HepG2 (cell line): ENCODE measurements at regions of chr17 and their contacts with region 1.

Region 1: GRCh38 chr17:78828470-78829185 is 12.0 kb downstream of the USP36 start:
- DNase-seq: no peak
- ATAC-seq: 0 out of 3 replicates have a peak, but pooled peaks have one; percentile 19
- H3K4me3 ChIP-seq: no peak overlapping the region
- H3K27ac ChIP-seq: no peak overlapping the region
- H3K4me1 ChIP-seq: peaks cover 29% of the 10 kb centered on the region
- H3K27me3 ChIP-seq: no peaks in the 10 kb centered on the region
- CTCF ChIP-seq: peak; percentile 31; the same call in 1 of the 2 replicates
- EP300 ChIP-seq: no peak
- POLR2A ChIP-seq: no peak
- RAD21 ChIP-seq: no peak

Region 2: DNA sequence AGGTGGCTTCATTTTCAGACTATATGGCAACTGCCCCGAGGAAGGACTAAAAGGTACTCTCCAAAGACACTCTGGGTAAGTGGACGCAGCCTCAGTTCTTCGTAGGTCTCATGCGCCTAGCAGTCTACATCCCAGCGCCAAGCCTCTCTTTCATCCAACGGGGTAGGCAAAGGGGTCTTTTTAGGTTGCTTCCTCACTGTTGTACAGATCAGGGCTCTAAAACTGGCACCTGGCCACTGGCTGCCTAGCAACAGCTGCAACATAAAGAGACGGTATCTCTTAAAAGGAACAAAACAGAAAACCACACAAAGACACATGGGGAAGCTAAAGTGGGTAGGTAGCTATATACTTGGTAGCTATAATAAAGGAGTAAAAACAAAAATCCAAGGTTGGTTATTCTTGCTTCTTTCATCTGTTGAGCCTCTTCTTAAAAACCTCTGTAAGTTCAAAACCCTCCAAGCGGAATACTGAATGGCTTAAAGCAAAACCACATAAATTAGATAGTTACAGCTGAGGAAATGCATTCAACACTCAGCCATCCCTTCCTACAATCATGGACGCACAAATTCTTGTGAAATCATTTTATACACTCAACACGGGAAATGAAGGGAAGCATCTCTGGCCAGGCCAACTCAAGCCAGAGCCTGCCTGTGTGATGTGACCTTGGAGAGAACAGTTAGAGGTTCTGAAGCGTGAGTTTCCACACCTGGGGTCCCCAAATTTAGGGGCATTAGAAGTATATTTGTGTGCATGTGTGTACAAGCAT is 69.2 kb before region 1 on chr17:
- CTCF ChIA-PET with region 1: no interaction called
- POLR2A ChIA-PET with region 1: no interaction called
- in situ Hi-C with region 1: no loop called
- intact Hi-C with region 1: no loop called
- DNase-seq: no peak
- ATAC-seq: peak; percentile 37
- H3K4me3 ChIP-seq: no peak overlapping the region
- H3K27ac ChIP-seq: peak overlapping the region; percentile 37
- H3K4me1 ChIP-seq: peaks cover 66% of the 10 kb centered on the region
- H3K27me3 ChIP-seq: no peaks in the 10 kb centered on the region
- CTCF ChIP-seq: no peak
- EP300 ChIP-seq: no peak
- POLR2A ChIP-seq: no peak
- RAD21 ChIP-seq: no peak

Region 3: GRCh38 chr17:78789663-78790181 is 38.9 kb before region 1 on chr17:
- CTCF ChIA-PET with region 1: no interaction called
- POLR2A ChIA-PET with region 1: no interaction called
- in situ Hi-C with region 1: no loop called
- intact Hi-C with region 1: loop called (anchors 5 kb)
- DNase-seq: no peak
- ATAC-seq: no peak
- H3K4me3 ChIP-seq: no peak overlapping the region
- H3K27ac ChIP-seq: no peak overlapping the region
- H3K4me1 ChIP-seq: peaks cover 37% of the 10 kb centered on the region
- H3K27me3 ChIP-seq: no peaks in the 10 kb centered on the region
- CTCF ChIP-seq: no peak
- EP300 ChIP-seq: no peak
- POLR2A ChIP-seq: no peak
- RAD21 ChIP-seq: no peak

Region 4: DNA sequence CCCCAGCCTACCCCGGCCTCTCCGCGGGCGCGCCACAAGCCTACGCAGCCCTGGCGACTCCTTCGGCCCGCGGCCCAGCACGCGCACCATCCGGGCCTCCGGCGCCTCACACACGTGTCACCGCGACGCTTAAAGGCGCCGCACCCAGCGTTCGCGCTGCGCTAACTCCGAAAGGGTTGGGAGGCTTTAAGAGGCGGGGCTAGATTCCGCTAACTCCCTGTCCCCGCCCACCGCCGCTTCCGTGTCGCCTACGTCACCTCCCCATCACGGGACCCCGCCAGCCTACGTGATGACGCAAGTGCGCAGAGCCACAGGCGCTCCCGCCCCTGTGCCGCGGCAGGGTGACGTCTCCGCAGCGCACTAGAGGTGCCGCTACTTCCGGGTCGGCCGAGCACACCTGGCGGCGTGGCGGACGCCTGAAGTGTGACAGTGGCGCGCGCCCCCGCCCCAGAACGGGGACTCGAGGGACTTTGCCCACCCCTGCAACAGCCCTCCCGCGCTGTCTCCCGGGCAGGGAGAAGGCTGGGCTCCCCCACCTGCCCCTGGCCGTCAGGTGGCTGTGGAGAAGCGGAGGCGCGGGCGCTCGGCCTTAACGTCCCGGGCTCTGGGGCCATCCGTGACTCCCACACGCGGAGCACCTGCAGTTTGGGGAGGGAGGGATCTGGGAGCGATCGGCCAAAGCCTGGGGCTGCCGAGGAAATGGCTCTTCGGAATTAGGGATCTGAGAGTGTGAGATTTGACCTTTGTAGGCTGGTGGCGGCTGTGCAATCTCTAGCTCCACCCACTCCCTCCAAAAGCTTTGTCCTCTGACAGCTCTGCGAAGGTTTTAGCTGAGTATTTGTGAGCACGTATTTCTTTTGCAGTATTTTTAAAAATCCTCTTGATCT is 12.3 kb after region 1 on chr17 and contains the start of gene USP36:
- CTCF ChIA-PET with region 1: no interaction called
- POLR2A ChIA-PET with region 1: interaction called, 23 read pairs
- in situ Hi-C with region 1: no loop called
- intact Hi-C with region 1: no loop called
- DNase-seq: peak; percentile 98
- ATAC-seq: peak; percentile 88
- H3K4me3 ChIP-seq: peak within 1 kb of the TSS; percentile 71 to 99 (median 91)
- H3K27ac ChIP-seq: peak within 1 kb of the TSS; percentile 91
- H3K4me1 ChIP-seq: peaks cover 60% of the 10 kb centered on the region
- H3K27me3 ChIP-seq: no peaks in the 10 kb centered on the region; a peak in 1 of 5 replicates
- CTCF ChIP-seq: peak; percentile 55
- EP300 ChIP-seq: peak in 1 of 2 experiments; percentile 54; a peak in 1 of 4 replicates
- POLR2A ChIP-seq: peak; percentile 57 to 91
- RAD21 ChIP-seq: no peak; the same call in none of the 2 replicates
- total RNA-seq, gene USP36: 29.6 and 30.7 TPM in 2 replicates

Region 5: DNA sequence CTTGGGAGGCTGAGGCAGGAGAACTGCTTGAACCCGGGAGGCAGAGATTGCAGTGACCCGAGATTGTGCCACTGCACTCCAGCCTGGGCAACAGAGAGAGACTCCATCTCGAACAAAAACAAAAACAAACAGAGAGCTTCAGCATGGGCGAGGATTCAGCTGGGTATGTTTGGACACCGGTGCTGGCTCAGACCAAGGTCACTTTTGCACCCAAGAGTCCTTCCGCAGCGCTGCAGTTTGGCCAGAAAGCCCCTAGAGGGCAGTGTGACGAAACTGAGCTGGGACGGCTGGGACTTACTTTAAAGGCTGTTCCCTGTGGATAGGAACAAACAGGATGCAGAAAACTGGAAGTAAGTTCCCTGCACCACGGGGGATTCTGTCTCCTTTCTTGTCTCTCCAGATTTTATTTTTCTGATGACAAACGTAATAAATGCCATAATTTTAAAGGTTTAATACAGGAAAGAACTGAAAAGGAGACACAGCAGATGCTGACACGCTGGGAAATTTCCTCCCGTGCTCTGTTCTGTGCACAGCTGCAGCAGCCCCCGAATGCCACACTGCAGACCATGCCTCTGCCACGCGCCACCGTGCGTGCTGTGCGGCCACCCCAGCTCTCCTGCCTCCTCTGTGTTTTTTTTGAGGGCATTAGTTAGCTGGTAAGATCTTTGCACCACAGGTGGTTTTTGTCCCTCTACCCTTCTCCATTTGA is 37.2 kb after region 1 on chr17:
- CTCF ChIA-PET with region 1: no interaction called
- POLR2A ChIA-PET with region 1: no interaction called
- in situ Hi-C with region 1: no loop called
- intact Hi-C with region 1: no loop called
- DNase-seq: peak; percentile 87
- ATAC-seq: peak; percentile 95
- H3K4me3 ChIP-seq: no peak overlapping the region
- H3K27ac ChIP-seq: no peak overlapping the region
- H3K4me1 ChIP-seq: peaks cover 15% of the 10 kb centered on the region
- H3K27me3 ChIP-seq: no peaks in the 10 kb centered on the region
- CTCF ChIP-seq: peak; percentile 97
- EP300 ChIP-seq: no peak
- POLR2A ChIP-seq: no peak
- RAD21 ChIP-seq: peak; percentile 92